K562 (cell line): ENCODE measurements at regions of chr14 and their contacts with region 1.

Region 1: GRCh38 chr14:64387694-64388532 is at the start of gene MTHFD1:
- DNase-seq: peak; percentile 96 to 97 (median 96)
- ATAC-seq: peak; percentile 90
- H3K4me3 ChIP-seq: peak within 1 kb of the TSS; percentile 59
- H3K27ac ChIP-seq: peak within 1 kb of the TSS; percentile 94
- H3K4me1 ChIP-seq: peaks cover 9 to 20% of the 10 kb centered on the region in 2 experiments; a peak in 4 of 5 replicates
- H3K27me3 ChIP-seq: no peaks in the 10 kb centered on the region
- CTCF ChIP-seq: no peak
- EP300 ChIP-seq: no peak
- POLR2A ChIP-seq: peak; percentile 81
- RAD21 ChIP-seq: no peak
- polyA plus RNA-seq, gene MTHFD1: 90.9 to 147 TPM

Region 2: GRCh38 chr14:64253672-64254071 is 134.2 kb before region 1 on chr14:
- CTCF ChIA-PET with region 1: no interaction called
- POLR2A ChIA-PET with region 1: no interaction called
- in situ Hi-C with region 1: no loop called
- intact Hi-C with region 1: no loop called
- DNase-seq: no peak
- ATAC-seq: no peak
- H3K4me3 ChIP-seq: no peak overlapping the region
- H3K27ac ChIP-seq: no peak overlapping the region
- H3K4me1 ChIP-seq: no peaks in the 10 kb centered on the region
- H3K27me3 ChIP-seq: no peaks in the 10 kb centered on the region
- CTCF ChIP-seq: no peak
- EP300 ChIP-seq: no peak
- POLR2A ChIP-seq: no peak
- RAD21 ChIP-seq: no peak

Region 3: DNA sequence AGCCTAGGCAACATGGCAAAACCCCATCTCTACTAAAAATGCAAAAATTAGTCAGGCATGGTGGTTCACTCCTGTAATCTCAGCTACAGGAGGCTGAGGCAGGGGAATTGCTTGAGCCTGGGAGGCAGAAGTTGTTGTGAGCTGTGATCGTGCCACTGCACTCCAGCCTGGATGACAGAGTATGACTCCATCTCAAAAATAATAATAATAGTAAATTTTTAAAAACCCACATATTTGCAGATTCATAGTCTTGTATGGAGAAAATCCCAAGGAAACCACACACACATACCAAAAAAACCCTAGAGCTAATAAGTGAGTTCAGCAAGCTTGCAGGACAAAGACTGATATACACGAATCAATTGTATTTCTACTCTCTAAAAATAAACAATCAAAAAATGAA is 18.7 kb before region 1 on chr14:
- CTCF ChIA-PET with region 1: interaction called, 3 read pairs
- POLR2A ChIA-PET with region 1: interaction called, 12 read pairs
- in situ Hi-C with region 1: no loop called
- intact Hi-C with region 1: no loop called
- DNase-seq: no peak
- ATAC-seq: no peak
- H3K4me3 ChIP-seq: no peak overlapping the region
- H3K27ac ChIP-seq: no peak overlapping the region
- H3K4me1 ChIP-seq: peaks cover 0 to 2% of the 10 kb centered on the region in 2 experiments; a peak in 1 of 5 replicates
- H3K27me3 ChIP-seq: no peaks in the 10 kb centered on the region
- CTCF ChIP-seq: no peak
- EP300 ChIP-seq: no peak
- POLR2A ChIP-seq: no peak
- RAD21 ChIP-seq: no peak